ENCODE measurements at regions of chr17 and their contacts with region 1.

Region 1: GRCh38 chr17:42517516-42517915 is 18.5 kb upstream of the NAGLU start:
- DNase-seq: peak; percentile 70 to 95
- H3K4me3 ChIP-seq: no peak overlapping the region
- H3K27ac ChIP-seq: peak overlapping the region; percentile 96 to 97
- H3K4me1 ChIP-seq: peaks cover 53 to 76% of the 10 kb centered on the region in 2 donors
- H3K27me3 ChIP-seq: no peaks in the 10 kb centered on the region
- CTCF ChIP-seq: peak; percentile 95 to 96 (median 95)

Region 2: DNA sequence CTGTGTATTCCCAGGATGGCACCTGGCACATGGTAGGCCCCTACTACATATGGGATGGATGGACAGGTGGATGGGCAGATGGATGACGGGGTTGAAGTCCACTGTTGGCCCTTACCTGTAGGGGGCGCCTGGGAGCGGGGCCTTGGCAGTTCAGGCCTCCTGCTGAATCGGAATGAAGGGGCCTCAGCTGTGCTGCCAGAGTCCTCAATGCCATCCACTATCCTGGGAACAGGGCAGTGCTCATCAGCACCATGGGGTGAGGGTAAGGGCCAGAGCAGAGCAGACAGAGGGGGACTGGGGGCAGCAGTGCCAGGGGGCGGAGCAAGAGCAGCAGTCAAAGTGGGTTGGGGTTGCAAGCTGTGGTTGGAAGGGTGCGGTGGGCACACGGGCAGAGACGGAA is 354.4 kb before region 1 on chr17:
- intact Hi-C with region 1: no loop called
- DNase-seq: no peak
- H3K4me3 ChIP-seq: no peak overlapping the region
- H3K27ac ChIP-seq: no peak overlapping the region
- H3K4me1 ChIP-seq: no peaks in the 10 kb centered on the region
- H3K27me3 ChIP-seq: no peaks in the 10 kb centered on the region
- CTCF ChIP-seq: peak in 1 of 3 experiments; percentile 11

Region 3: GRCh38 chr17:42322382-42323267 is 194.9 kb before region 1 on chr17:
- intact Hi-C with region 1: loop called (anchors 2 kb)
- DNase-seq: peak; percentile 63 to 97
- H3K4me3 ChIP-seq: no peak overlapping the region
- H3K27ac ChIP-seq: peak overlapping the region; percentile 6 to 48
- H3K4me1 ChIP-seq: peaks cover 0 to 6% of the 10 kb centered on the region in 2 donors
- H3K27me3 ChIP-seq: no peaks in the 10 kb centered on the region
- CTCF ChIP-seq: peak; percentile 94 to 99 (median 99)

Region 4: GRCh38 chr17:42405963-42406495 is 111.5 kb before region 1 on chr17:
- intact Hi-C with region 1: loop called (anchors 5 kb)
- DNase-seq: peak in 1 of 2 donors; percentile 91
- H3K4me3 ChIP-seq: peak overlapping the region in 1 of 2 donors; percentile 2
- H3K27ac ChIP-seq: peak overlapping the region; percentile 76 to 84
- H3K4me1 ChIP-seq: peaks cover 33 to 59% of the 10 kb centered on the region in 2 donors
- H3K27me3 ChIP-seq: no peaks in the 10 kb centered on the region
- CTCF ChIP-seq: peak; percentile 84 to 90 (median 89)

Region 5: DNA sequence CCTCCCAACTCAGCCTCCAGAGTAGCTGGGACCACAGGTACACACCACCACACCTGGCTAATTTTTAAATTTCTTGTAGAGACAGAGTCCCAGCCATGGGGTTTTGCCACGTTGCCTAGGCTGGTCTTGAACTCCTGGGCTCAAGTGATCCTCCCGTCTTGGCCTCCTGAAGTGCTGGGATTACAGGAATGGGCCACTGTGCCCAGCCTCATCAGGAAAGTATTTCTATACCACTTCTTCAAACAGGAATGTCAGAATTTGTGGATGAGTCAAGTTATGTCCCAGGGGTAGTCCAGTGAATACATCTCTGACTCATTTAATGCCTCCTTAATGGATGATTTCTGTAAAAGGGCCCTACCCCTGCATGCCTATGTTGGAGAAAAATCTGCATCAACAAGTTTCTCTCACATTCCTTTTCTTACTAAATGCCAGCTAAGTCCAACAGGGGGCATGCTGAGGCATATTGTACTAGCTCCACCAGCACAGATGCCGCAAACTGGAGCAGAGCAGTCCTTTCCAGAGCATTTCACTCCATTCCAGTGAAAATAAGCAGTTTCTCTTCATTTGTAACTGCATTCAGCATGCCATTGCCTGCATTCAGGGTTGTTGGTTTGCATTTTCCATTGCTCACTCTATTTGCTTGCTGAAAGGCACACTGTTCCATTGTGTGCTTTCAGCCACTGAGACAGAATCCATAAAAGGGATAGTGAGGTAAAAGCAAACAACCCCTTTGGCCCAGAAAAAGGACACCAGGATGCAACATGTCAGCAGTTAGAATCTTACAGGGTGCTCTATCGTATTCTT is 89.2 kb before region 1 on chr17:
- intact Hi-C with region 1: loop called (anchors 2 kb)
- DNase-seq: peak in 1 of 2 donors; percentile 86
- H3K4me3 ChIP-seq: no peak overlapping the region
- H3K27ac ChIP-seq: peak overlapping the region; percentile 8 to 64
- H3K4me1 ChIP-seq: peaks cover 3 to 19% of the 10 kb centered on the region in 2 donors
- H3K27me3 ChIP-seq: no peaks in the 10 kb centered on the region
- CTCF ChIP-seq: peak; percentile 67 to 75 (median 69)

Region 6: GRCh38 chr17:42459256-42459800 is 58.2 kb before region 1 on chr17:
- intact Hi-C with region 1: loop called (anchors 2 kb)
- DNase-seq: peak in 1 of 2 donors; percentile 69
- H3K4me3 ChIP-seq: peak overlapping the region; percentile 76 to 90
- H3K27ac ChIP-seq: peak overlapping the region; percentile 92 to 98
- H3K4me1 ChIP-seq: peaks cover 4 to 24% of the 10 kb centered on the region in 2 donors
- H3K27me3 ChIP-seq: no peaks in the 10 kb centered on the region
- CTCF ChIP-seq: peak in 2 of 3 experiments; percentile 12 to 45